B cell (primary cell): ENCODE measurements at regions of chr5 and their contacts with region 1.

Region 1: DNA sequence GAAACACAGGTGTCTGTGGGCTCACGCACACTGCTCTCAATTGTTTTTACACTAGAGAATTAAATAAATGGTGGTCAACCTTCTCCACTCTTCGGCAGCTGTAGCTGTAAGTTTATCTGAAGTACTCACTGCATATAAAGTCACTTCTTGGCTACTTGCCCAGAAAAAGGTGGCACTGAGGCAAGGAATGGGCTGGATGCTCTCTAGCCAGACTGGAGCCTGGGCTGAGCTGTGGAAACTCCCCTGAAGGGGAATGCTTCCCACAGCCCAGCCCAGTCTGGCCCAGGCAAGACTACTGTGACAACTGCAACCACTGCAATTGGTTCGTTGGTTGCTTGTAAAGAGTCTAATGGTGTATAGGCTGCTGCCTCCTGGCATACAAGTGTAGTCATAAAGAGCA is 4.5 kb downstream of the LEAP2 start:
- DNase-seq: no peak
- ATAC-seq: no peak
- H3K4me3 ChIP-seq: no peak overlapping the region
- H3K4me3 Mint-ChIP-seq: no peak overlapping the region
- H3K27ac ChIP-seq: no peak overlapping the region
- H3K27ac Mint-ChIP-seq: no peak overlapping the region
- H3K4me1 ChIP-seq: no peaks in the 10 kb centered on the region
- H3K4me1 Mint-ChIP-seq: no peaks in the 10 kb centered on the region
- H3K27me3 ChIP-seq: no peaks in the 10 kb centered on the region
- H3K27me3 Mint-ChIP-seq: no peaks in the 10 kb centered on the region
- CTCF ChIP-seq: no peak

Region 2: DNA sequence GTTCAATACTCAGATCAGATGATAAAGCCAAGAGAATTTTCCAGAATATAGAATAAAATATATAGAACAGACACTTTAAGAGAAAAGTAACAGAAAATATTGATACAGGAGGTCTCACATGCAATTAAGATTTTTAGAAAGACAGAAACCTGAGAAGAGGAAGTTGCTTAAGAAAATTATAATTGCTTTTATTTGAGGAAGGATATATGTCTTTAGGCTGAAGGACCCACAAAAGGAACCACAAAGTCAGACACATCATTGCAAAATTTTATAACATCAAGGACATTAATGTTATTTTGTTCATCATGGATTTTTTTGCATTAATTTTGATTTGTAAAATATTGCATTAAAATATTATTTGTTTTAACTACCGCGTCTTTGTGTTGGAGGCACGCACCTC is 592.9 kb after region 1 on chr5:
- CTCF ChIA-PET with region 1: no interaction called
- POLR2A ChIA-PET with region 1: interaction called, 10 read pairs
- intact Hi-C with region 1: no loop called
- DNase-seq: no peak
- ATAC-seq: no peak
- H3K4me3 ChIP-seq: no peak overlapping the region
- H3K4me3 Mint-ChIP-seq: no peak overlapping the region
- H3K27ac ChIP-seq: no peak overlapping the region
- H3K27ac Mint-ChIP-seq: no peak overlapping the region
- H3K4me1 ChIP-seq: no peaks in the 10 kb centered on the region
- H3K4me1 Mint-ChIP-seq: no peaks in the 10 kb centered on the region
- H3K27me3 ChIP-seq: peaks cover 0 to 8% (median 0%) of the 10 kb centered on the region in 4 experiments
- H3K27me3 Mint-ChIP-seq: peaks cover 27% of the 10 kb centered on the region
- CTCF ChIP-seq: no peak